GM10248 (cell line): ENCODE measurements at regions of chr2 and their contacts with region 1.

Region 1: DNA sequence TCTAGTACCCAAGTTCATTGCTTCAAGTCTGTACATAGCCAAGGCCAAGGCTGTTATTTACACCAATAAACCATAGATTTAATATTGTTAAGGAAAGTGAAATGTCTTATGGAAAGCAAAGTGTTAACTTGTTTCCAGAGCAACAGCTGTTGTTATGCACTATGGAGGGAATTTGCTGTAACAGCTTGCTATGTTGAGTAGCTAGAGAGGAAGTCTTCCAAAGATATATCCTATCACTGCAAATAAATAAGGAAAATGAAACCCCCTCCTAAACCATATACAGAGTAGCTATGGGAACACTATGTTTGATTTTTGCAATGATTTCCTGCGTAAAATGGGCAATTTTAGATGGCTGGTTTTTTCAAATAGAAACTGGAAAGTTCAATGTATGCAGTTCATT is 21.1 kb downstream of the TMEM182 start:
- DNase-seq: no peak
- CTCF ChIP-seq: no peak

Region 2: GRCh38 chr2:102801098-102801718 is 18.3 kb after region 1 on chr2:
- CTCF ChIA-PET with region 1: interaction called, 13 read pairs
- POLR2A ChIA-PET with region 1: no interaction called
- DNase-seq: no peak
- CTCF ChIP-seq: no peak

Region 3: GRCh38 chr2:102806250-102806837 is 23.4 kb after region 1 on chr2:
- CTCF ChIA-PET with region 1: interaction called, 13 read pairs
- POLR2A ChIA-PET with region 1: no interaction called
- DNase-seq: peak; percentile 73
- CTCF ChIP-seq: peak; percentile 76